ENCODE measurements at regions of chr12 and their contacts with region 1.

Region 1: DNA sequence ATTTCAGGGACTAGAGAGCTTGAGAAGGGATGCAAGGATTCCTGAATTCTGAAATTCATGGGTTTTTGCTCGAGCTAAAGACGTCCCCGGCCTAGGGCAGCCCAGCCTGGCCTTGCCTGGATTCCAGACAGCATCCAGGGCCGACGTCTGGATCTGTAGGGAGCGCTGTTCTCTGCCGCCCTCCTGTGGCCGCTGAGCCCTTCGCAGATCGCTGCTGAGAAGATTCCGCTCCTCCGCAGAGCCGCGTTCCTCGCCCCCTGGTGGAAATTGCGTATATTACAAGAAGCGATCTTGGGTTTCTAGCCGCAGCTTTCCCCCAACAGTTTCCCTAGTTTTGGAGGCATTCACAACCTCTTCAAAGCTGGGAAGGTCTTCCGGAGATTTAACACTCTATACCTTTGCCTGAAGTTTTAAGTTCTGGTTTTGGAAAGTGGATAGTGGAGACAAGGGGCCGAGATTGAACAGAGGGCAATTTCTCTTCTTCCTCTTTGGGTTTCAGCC is 5.1 kb downstream of the CISTR start:
- DNase-seq: peak; percentile 82 to 91 (median 86)
- H3K4me3 ChIP-seq: no peak overlapping the region
- H3K4me3 Mint-ChIP-seq: peak overlapping the region; percentile 17 to 66 (median 51)
- H3K27ac ChIP-seq: no peak overlapping the region
- H3K27ac Mint-ChIP-seq: peak overlapping the region in 2 of 8 donors; percentile 13 to 70
- H3K4me1 ChIP-seq: peaks cover 17% of the 10 kb centered on the region
- H3K4me1 Mint-ChIP-seq: peaks cover 5 to 7% (median 6%) of the 10 kb centered on the region in 3 donors
- H3K27me3 ChIP-seq: peaks cover 37% of the 10 kb centered on the region
- H3K27me3 Mint-ChIP-seq: peaks cover 19 to 57% of the 10 kb centered on the region in 2 donors

Region 2: DNA sequence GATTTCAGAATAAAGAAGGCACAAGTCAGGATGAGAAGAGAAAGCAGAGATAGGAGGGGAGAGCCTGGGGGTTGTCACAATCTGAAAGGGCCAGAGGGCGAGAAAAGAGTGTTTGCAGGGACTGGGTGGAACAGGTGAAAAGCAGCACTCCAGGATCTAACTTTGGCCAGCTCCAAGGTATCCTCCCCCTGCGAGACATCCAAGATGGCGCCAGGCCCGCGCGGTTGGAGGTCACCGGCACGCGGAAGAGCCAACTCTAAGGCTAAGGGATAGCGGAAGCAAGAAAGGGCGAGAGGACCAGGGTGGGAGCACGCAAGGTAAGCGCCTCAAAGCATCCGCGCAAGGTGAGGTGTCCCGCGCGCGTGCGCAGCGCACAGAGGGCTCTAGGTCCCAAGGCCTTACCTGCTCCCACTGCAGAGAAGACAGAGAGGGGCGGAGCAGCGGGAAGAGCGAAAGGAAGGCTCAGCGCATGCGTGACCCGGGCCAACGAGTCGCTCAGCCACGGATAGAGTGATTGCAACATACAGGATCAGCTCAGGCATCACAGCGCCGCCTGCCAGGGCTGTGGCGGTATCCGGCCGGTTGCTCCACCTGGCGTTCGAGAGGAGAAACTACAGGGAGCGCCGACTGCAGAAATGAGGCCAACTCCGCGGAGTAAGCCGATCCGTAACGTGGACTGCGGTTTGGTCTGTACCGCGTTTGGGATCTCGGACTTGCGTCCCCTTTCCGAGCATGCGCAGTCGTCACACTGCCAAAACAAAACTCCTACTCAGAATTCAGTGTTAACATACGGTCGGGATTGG is 70.8 kb before region 1 on chr12 and contains the start of gene ATP5MC2:
- CTCF ChIA-PET with region 1: interaction called, 18 read pairs
- POLR2A ChIA-PET with region 1: interaction called, 3 read pairs
- DNase-seq: peak; percentile 95 to 98 (median 97)
- H3K4me3 ChIP-seq: peak within 1 kb of the TSS; percentile 84
- H3K4me3 Mint-ChIP-seq: peak within 1 kb of the TSS; percentile 87 to 98 (median 96)
- H3K27ac ChIP-seq: peak within 1 kb of the TSS; percentile 69
- H3K27ac Mint-ChIP-seq: peak within 1 kb of the TSS; percentile 81 to 98 (median 96)
- H3K4me1 ChIP-seq: peaks cover 19% of the 10 kb centered on the region
- H3K4me1 Mint-ChIP-seq: peaks cover 39 to 52% (median 39%) of the 10 kb centered on the region in 3 donors
- H3K27me3 ChIP-seq: peaks cover 8% of the 10 kb centered on the region
- H3K27me3 Mint-ChIP-seq: peaks cover 17 to 20% of the 10 kb centered on the region in 2 donors
- total RNA-seq, gene ATP5MC2: 342 to 350 TPM

Region 3: GRCh38 chr12:53696285-53696654 is 50.4 kb before region 1 on chr12:
- CTCF ChIA-PET with region 1: interaction called, 133 read pairs
- POLR2A ChIA-PET with region 1: interaction called, 4 read pairs
- DNase-seq: no peak
- H3K4me3 ChIP-seq: no peak overlapping the region
- H3K4me3 Mint-ChIP-seq: peak overlapping the region; percentile 48 to 76 (median 65)
- H3K27ac ChIP-seq: no peak overlapping the region
- H3K27ac Mint-ChIP-seq: peak overlapping the region in 1 of 8 donors; percentile 22
- H3K4me1 ChIP-seq: peaks cover 18% of the 10 kb centered on the region
- H3K4me1 Mint-ChIP-seq: peaks cover 25 to 32% (median 30%) of the 10 kb centered on the region in 3 donors
- H3K27me3 ChIP-seq: peaks cover 70% of the 10 kb centered on the region
- H3K27me3 Mint-ChIP-seq: peaks cover 57 to 92% of the 10 kb centered on the region in 2 donors

Region 4: GRCh38 chr12:53719649-53720048 is 27.0 kb before region 1 on chr12:
- CTCF ChIA-PET with region 1: interaction called, 269 read pairs
- POLR2A ChIA-PET with region 1: no interaction called
- DNase-seq: no peak
- H3K4me3 ChIP-seq: no peak overlapping the region
- H3K4me3 Mint-ChIP-seq: no peak overlapping the region
- H3K27ac ChIP-seq: no peak overlapping the region
- H3K27ac Mint-ChIP-seq: peak overlapping the region in 2 of 8 donors; percentile 30 to 60
- H3K4me1 ChIP-seq: no peaks in the 10 kb centered on the region
- H3K4me1 Mint-ChIP-seq: peaks cover 0 to 6% (median 3%) of the 10 kb centered on the region in 3 donors
- H3K27me3 ChIP-seq: no peaks in the 10 kb centered on the region
- H3K27me3 Mint-ChIP-seq: no peaks in the 10 kb centered on the region

Region 5: GRCh38 chr12:53757095-53757770 is 10.6 kb after region 1 on chr12:
- CTCF ChIA-PET with region 1: interaction called, 110 read pairs
- POLR2A ChIA-PET with region 1: interaction called, 7 read pairs
- DNase-seq: peak; percentile 66 to 86 (median 74)
- H3K4me3 ChIP-seq: peak overlapping the region; percentile 10
- H3K4me3 Mint-ChIP-seq: peak overlapping the region; percentile 57 to 79 (median 73)
- H3K27ac ChIP-seq: no peak overlapping the region
- H3K27ac Mint-ChIP-seq: peak overlapping the region in 6 of 8 donors; percentile 52 to 83 (median 64)
- H3K4me1 ChIP-seq: peaks cover 9% of the 10 kb centered on the region
- H3K4me1 Mint-ChIP-seq: peaks cover 0 to 16% (median 13%) of the 10 kb centered on the region in 3 donors
- H3K27me3 ChIP-seq: peaks cover 36% of the 10 kb centered on the region
- H3K27me3 Mint-ChIP-seq: peaks cover 31 to 40% of the 10 kb centered on the region in 2 donors

Region 6: DNA sequence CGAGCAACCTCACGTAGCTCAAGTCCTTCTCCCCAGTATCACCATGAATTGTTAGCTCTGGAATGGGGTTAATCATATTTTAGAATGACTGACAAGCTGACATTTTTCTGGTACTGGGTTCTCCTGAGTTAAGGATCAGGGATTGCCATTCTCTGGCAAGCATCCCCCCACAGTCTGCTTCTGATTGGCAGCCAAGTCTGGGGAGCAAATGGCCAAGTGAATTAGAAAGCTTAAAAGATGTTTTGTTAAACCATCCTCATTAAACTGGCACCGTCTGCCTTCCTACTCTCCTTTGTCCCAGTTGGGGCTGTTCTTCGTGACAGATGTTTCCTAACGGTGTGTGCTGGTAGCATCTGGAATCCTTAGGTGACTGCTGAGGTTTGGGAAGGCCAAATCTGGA is 22.3 kb after region 1 on chr12:
- CTCF ChIA-PET with region 1: no interaction called
- POLR2A ChIA-PET with region 1: no interaction called
- DNase-seq: no peak
- H3K4me3 ChIP-seq: no peak overlapping the region
- H3K4me3 Mint-ChIP-seq: no peak overlapping the region
- H3K27ac ChIP-seq: no peak overlapping the region
- H3K27ac Mint-ChIP-seq: no peak overlapping the region
- H3K4me1 ChIP-seq: no peaks in the 10 kb centered on the region
- H3K4me1 Mint-ChIP-seq: no peaks in the 10 kb centered on the region
- H3K27me3 ChIP-seq: peaks cover 8% of the 10 kb centered on the region
- H3K27me3 Mint-ChIP-seq: peaks cover 29 to 76% of the 10 kb centered on the region in 2 donors

Measured in CD8-positive, alpha-beta memory T cell (primary cell).